HAP-1 (cell line): ENCODE measurements at regions of chr2 and their contacts with region 1.

Region 1: GRCh38 chr2:106098081-106098480 is 96.0 kb downstream of the UXS1 start:
- DNase-seq: peak in 1 of 2 experiments; percentile 22
- H3K4me3 ChIP-seq: no peak overlapping the region
- H3K4me1 ChIP-seq: no peaks in the 10 kb centered on the region
- H3K27me3 ChIP-seq: no peaks in the 10 kb centered on the region

Region 2: DNA sequence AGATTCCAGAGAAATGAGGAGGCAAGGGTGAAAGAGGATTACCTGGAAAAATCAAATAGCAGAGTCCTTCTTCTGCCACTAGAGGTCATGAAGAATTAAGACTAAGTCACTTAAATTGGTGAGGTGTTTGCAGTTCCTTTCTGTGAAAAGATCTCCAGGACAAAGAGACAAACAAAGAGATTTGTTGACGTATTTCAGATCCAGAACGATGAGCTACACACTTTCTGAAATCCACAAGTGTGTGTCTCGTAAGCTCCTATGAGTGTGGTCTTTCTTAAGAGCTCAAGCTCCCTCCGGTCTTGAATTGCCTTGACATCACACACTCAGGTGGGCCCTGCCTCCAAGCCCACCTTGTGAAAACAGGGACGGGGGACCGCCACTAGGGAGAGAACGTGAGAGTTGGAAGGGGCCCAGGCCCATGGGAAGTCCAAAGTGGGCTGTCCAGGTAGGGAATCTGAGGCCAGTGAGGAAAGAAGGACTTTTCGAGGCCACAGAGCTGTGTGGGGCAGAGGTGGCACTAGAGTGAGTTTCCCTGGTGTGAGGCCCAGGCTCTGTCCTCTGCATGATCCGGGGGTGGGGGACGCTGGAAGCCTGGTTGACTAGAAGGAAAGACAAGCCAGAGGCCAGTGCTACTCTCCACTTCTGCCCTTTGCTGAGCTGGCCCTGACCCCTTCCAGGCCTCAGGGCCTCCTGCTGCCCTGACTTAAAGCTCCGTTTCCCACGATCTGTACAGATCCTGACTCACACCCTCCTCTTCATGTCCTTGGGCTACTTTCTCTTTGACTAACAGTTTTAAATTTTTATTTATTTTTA is 521.4 kb before region 1 on chr2:
- in situ Hi-C with region 1: loop called (anchors 10 kb)
- DNase-seq: peak in 1 of 2 experiments; percentile 82
- H3K4me3 ChIP-seq: no peak overlapping the region
- H3K4me1 ChIP-seq: peaks cover 3% of the 10 kb centered on the region; the same call in 1 of the 2 replicates
- H3K27me3 ChIP-seq: peaks cover 2% of the 10 kb centered on the region; the same call in 1 of the 2 replicates